Heart left ventricle (tissue), 16 donors: ENCODE measurements at regions of chr19 and their contacts with region 1.

Region 1: DNA sequence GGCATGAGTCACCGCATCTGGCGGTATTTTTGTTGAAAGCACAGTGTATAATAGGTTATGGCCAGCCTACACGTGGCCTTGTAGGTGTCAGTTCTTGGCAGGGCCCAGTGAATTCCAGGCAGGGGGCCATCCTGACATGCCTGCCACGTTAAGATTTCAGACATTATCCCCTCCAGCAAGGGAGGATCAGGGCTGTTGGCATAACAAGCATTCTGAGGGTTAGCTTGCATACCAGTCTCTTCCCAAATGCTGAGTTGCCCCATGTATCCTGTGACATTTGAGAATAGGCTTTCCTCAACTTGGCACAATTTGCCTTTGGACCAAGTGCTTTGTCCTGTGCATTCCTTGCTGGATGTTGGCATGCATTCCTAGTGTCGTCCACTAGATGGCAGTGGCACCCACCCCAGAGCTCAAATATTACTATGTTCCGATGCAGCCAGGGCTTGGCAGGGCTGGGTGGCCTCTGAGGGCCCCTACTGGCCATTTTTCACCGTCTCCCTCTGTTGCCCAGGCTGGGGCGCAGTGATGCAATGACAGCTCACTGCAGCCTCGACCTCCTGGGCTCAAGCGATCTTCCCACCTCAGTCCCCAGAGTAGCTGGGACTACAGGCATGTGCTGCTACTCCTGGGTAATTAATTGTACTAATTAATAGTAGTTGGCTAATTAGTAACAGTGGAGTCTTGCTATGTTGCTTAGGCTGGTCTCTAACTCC is 31.2 kb downstream of the NLRP12 start:
- DNase-seq: peak; percentile 77 to 90 (median 85)
- ATAC-seq: peak; percentile 96 to 99 (median 97)
- H3K4me3 ChIP-seq: no peak overlapping the region
- H3K27ac ChIP-seq: no peak overlapping the region
- H3K4me1 ChIP-seq: no peaks in the 10 kb centered on the region
- H3K27me3 ChIP-seq: no peaks in the 10 kb centered on the region
- CTCF ChIP-seq: peak; percentile 94 to 100 (median 99)
- POLR2A ChIP-seq: no peak

Region 2: GRCh38 chr19:53772943-53773342 is 19.9 kb before region 1 on chr19:
- intact Hi-C with region 1: loop called in 1 of 10 experiments (anchors 1 kb)
- DNase-seq: peak in 2 of 5 donors; percentile 22 to 44
- ATAC-seq: peak in 1 of 4 donors; percentile 36
- H3K4me3 ChIP-seq: no peak overlapping the region
- H3K27ac ChIP-seq: no peak overlapping the region
- H3K4me1 ChIP-seq: no peaks in the 10 kb centered on the region
- H3K27me3 ChIP-seq: peaks cover 0 to 20% (median 0%) of the 10 kb centered on the region in 9 donors
- CTCF ChIP-seq: peak; percentile 51 to 73 (median 64)
- POLR2A ChIP-seq: no peak

Region 3: GRCh38 chr19:54035215-54036178 is 242.6 kb after region 1 on chr19:
- intact Hi-C with region 1: no loop called
- DNase-seq: no peak
- ATAC-seq: no peak
- H3K4me3 ChIP-seq: no peak overlapping the region
- H3K27ac ChIP-seq: no peak overlapping the region
- H3K4me1 ChIP-seq: no peaks in the 10 kb centered on the region
- H3K27me3 ChIP-seq: peaks cover 0 to 7% (median 0%) of the 10 kb centered on the region in 9 donors
- CTCF ChIP-seq: no peak
- POLR2A ChIP-seq: no peak